Panc1 (cell line): ENCODE measurements at regions of chr5 and their contacts with region 1.

Region 1: GRCh38 chr5:176938472-176938871 is 39.3 kb upstream of the HK3 start:
- DNase-seq: no peak
- ATAC-seq: no peak
- H3K4me3 ChIP-seq: no peak overlapping the region
- H3K27ac ChIP-seq: no peak overlapping the region
- H3K4me1 ChIP-seq: no peaks in the 10 kb centered on the region
- H3K27me3 ChIP-seq: no peaks in the 10 kb centered on the region
- CTCF ChIP-seq: no peak

Region 2: GRCh38 chr5:176192094-176192721 is 746.3 kb before region 1 on chr5:
- CTCF ChIA-PET with region 1: no interaction called
- POLR2A ChIA-PET with region 1: interaction called, 15 read pairs
- in situ Hi-C with region 1: no loop called
- intact Hi-C with region 1: no loop called
- DNase-seq: no peak
- ATAC-seq: no peak
- H3K4me3 ChIP-seq: no peak overlapping the region
- H3K27ac ChIP-seq: no peak overlapping the region
- H3K4me1 ChIP-seq: no peaks in the 10 kb centered on the region
- H3K27me3 ChIP-seq: no peaks in the 10 kb centered on the region
- CTCF ChIP-seq: no peak

Region 3: GRCh38 chr5:176921714-176922113 is 16.8 kb before region 1 on chr5:
- CTCF ChIA-PET with region 1: interaction called, 11 read pairs
- POLR2A ChIA-PET with region 1: no interaction called
- in situ Hi-C with region 1: no loop called
- intact Hi-C with region 1: no loop called
- DNase-seq: no peak
- ATAC-seq: no peak
- H3K4me3 ChIP-seq: no peak overlapping the region
- H3K27ac ChIP-seq: no peak overlapping the region
- H3K4me1 ChIP-seq: no peaks in the 10 kb centered on the region
- H3K27me3 ChIP-seq: no peaks in the 10 kb centered on the region
- CTCF ChIP-seq: no peak